ENCODE measurements at regions of chr15 and their contacts with region 1.

Region 1: DNA sequence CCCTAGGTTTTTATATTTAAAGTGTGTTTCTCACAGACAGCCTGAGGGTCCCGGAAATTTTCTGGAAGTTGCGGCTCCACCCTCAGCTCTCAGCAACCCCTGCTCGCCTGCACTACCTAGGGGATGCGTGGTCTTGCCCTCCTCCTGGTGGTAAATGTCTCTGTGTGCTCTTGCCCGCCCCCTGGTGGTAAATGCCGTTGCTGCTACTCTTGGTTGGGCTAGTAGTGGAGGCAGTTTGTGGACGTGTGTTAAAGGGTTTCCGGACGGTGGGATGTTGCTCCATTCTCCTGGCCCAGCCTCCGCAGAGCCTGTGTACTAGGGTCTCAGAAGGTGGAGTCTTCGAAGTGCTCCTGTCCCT is 27.4 kb downstream of the STOML1 start:
- DNase-seq: peak; percentile 83
- ATAC-seq: peak; percentile 89 to 94

Region 2: GRCh38 chr15:73897441-73898261 is 67.1 kb before region 1 on chr15:
- intact Hi-C with region 1: loop called in 1 of 2 experiments (anchors 10 kb)
- DNase-seq: peak; percentile 40
- ATAC-seq: peak; percentile 75 to 79

Measured in left cardiac atrium (tissue), 4 donors.